Naive thymus-derived CD4-positive, alpha-beta T cell (primary cell): ENCODE measurements at regions of chr13 and their contacts with region 1.

Region 1: GRCh38 chr13:23871616-23872220 is 17.5 kb downstream of the MIPEP start:
- DNase-seq: peak in 4 of 9 donors; percentile 11 to 30 (median 23)
- ATAC-seq: no peak
- H3K4me3 ChIP-seq: no peak overlapping the region
- H3K4me3 Mint-ChIP-seq: no peak overlapping the region
- H3K27ac ChIP-seq: no peak overlapping the region
- H3K27ac Mint-ChIP-seq: no peak overlapping the region
- H3K4me1 ChIP-seq: no peaks in the 10 kb centered on the region
- H3K4me1 Mint-ChIP-seq: no peaks in the 10 kb centered on the region
- H3K27me3 ChIP-seq: no peaks in the 10 kb centered on the region
- H3K27me3 Mint-ChIP-seq: no peaks in the 10 kb centered on the region

Region 2: GRCh38 chr13:23411706-23412105 is 460.0 kb before region 1 on chr13:
- CTCF ChIA-PET with region 1: interaction called, 4 read pairs
- POLR2A ChIA-PET with region 1: no interaction called
- intact Hi-C with region 1: loop called in 1 of 2 experiments (anchors 1 kb)
- DNase-seq: no peak
- ATAC-seq: no peak
- H3K4me3 ChIP-seq: no peak overlapping the region
- H3K4me3 Mint-ChIP-seq: no peak overlapping the region
- H3K27ac ChIP-seq: no peak overlapping the region
- H3K27ac Mint-ChIP-seq: no peak overlapping the region
- H3K4me1 ChIP-seq: no peaks in the 10 kb centered on the region
- H3K4me1 Mint-ChIP-seq: peaks cover 0 to 3% (median 0%) of the 10 kb centered on the region in 7 donors
- H3K27me3 ChIP-seq: no peaks in the 10 kb centered on the region
- H3K27me3 Mint-ChIP-seq: peaks cover 4 to 17% (median 6%) of the 10 kb centered on the region in 5 donors

Region 3: DNA sequence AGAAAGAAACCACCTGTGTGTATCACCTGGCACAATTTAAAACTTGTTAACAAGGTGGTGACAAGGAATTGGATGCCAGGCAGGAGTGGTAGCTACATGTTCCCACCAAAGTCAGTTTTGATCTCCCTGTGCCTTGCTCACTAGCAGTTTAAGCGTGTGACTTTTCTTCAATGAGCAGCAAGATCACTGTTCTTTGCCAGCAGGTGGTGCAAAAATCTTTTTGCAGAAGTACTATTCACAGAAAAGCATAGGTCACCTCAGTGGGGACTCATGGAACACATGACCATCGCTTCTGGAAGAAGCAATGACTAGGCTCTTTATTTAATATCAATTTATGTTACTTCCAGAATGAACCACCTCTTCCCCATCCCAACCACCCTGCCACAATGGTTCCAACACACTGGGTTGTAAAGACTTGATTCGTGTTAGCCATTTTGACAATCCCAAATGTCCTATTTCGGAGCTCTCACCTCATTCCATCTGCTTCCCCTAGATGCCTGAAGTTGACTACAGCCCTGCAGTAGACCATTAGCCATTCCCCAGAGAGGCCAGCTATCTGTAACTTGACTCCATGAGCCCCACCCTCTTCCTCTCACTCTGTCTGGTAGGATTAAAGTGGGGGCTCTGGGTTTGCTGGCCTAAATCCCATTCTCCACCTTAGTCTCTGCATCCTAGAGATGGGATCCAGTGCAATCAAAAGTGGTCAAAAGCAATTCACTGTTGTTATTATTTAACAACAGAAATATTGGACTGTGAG is 360.6 kb before region 1 on chr13:
- CTCF ChIA-PET with region 1: no interaction called
- POLR2A ChIA-PET with region 1: no interaction called
- intact Hi-C with region 1: loop called (anchors 1 kb)
- DNase-seq: no peak
- ATAC-seq: no peak
- H3K4me3 ChIP-seq: no peak overlapping the region
- H3K4me3 Mint-ChIP-seq: no peak overlapping the region
- H3K27ac ChIP-seq: no peak overlapping the region
- H3K27ac Mint-ChIP-seq: no peak overlapping the region
- H3K4me1 ChIP-seq: no peaks in the 10 kb centered on the region
- H3K4me1 Mint-ChIP-seq: no peaks in the 10 kb centered on the region
- H3K27me3 ChIP-seq: no peaks in the 10 kb centered on the region
- H3K27me3 Mint-ChIP-seq: peaks cover 16 to 51% (median 29%) of the 10 kb centered on the region in 5 donors

Region 4: GRCh38 chr13:23667750-23668149 is 204.0 kb before region 1 on chr13:
- CTCF ChIA-PET with region 1: no interaction called
- POLR2A ChIA-PET with region 1: no interaction called
- intact Hi-C with region 1: loop called in 1 of 2 experiments (anchors 1 kb)
- DNase-seq: no peak
- ATAC-seq: no peak
- H3K4me3 ChIP-seq: no peak overlapping the region
- H3K4me3 Mint-ChIP-seq: no peak overlapping the region
- H3K27ac ChIP-seq: no peak overlapping the region
- H3K27ac Mint-ChIP-seq: no peak overlapping the region
- H3K4me1 ChIP-seq: no peaks in the 10 kb centered on the region
- H3K4me1 Mint-ChIP-seq: no peaks in the 10 kb centered on the region
- H3K27me3 ChIP-seq: no peaks in the 10 kb centered on the region
- H3K27me3 Mint-ChIP-seq: peaks cover 2 to 27% (median 8%) of the 10 kb centered on the region in 5 donors

Region 5: GRCh38 chr13:23715762-23716235 is 155.9 kb before region 1 on chr13:
- CTCF ChIA-PET with region 1: no interaction called
- POLR2A ChIA-PET with region 1: no interaction called
- intact Hi-C with region 1: loop called (anchors 2 to 5 kb)
- DNase-seq: no peak
- ATAC-seq: no peak
- H3K4me3 ChIP-seq: no peak overlapping the region
- H3K4me3 Mint-ChIP-seq: no peak overlapping the region
- H3K27ac ChIP-seq: no peak overlapping the region
- H3K27ac Mint-ChIP-seq: no peak overlapping the region
- H3K4me1 ChIP-seq: no peaks in the 10 kb centered on the region
- H3K4me1 Mint-ChIP-seq: peaks cover 14 to 38% (median 32%) of the 10 kb centered on the region in 7 donors
- H3K27me3 ChIP-seq: no peaks in the 10 kb centered on the region
- H3K27me3 Mint-ChIP-seq: peaks cover 0 to 18% (median 11%) of the 10 kb centered on the region in 5 donors

Region 6: DNA sequence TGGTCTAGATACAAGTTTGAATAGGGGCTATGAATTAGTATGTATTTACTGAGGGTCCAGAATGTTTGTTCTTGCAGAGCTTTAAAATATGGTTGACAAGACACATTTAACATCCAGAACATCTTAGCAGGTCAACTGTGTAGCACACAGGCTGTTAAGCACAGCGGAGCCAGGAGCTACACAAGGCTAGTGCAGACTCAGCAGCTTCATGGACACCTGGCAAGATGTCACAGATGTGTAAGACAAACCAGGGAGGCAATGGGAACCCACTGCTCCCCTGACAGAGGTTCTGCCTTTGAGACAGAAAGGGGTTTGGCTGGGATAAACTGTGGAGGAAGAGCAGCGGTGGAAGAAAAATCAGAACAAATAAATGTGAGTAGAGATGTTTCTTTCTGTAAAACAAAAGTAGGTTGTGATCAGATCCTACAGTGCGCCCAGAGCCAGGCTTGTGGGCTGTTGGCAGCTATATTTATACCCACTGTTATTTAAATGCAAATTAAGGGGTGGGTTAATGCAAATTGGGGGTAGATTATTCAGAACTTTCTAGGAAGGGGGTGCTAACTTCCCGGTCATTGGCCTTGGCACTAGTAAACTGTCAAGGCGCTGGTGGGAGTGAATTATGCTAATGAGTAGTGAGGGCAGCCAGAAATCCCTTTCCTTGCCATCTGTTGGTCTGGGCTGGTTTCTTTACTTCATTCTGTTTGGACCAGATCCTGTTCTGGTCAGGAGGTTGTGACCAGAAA is 15.5 kb before region 1 on chr13:
- CTCF ChIA-PET with region 1: no interaction called
- POLR2A ChIA-PET with region 1: no interaction called
- intact Hi-C with region 1: no loop called
- DNase-seq: no peak
- ATAC-seq: no peak
- H3K4me3 ChIP-seq: no peak overlapping the region
- H3K4me3 Mint-ChIP-seq: no peak overlapping the region
- H3K27ac ChIP-seq: no peak overlapping the region
- H3K27ac Mint-ChIP-seq: peak overlapping the region in 1 of 9 donors; percentile 15
- H3K4me1 ChIP-seq: no peaks in the 10 kb centered on the region
- H3K4me1 Mint-ChIP-seq: peaks cover 0 to 2% (median 0%) of the 10 kb centered on the region in 7 donors
- H3K27me3 ChIP-seq: no peaks in the 10 kb centered on the region
- H3K27me3 Mint-ChIP-seq: no peaks in the 10 kb centered on the region

Region 7: DNA sequence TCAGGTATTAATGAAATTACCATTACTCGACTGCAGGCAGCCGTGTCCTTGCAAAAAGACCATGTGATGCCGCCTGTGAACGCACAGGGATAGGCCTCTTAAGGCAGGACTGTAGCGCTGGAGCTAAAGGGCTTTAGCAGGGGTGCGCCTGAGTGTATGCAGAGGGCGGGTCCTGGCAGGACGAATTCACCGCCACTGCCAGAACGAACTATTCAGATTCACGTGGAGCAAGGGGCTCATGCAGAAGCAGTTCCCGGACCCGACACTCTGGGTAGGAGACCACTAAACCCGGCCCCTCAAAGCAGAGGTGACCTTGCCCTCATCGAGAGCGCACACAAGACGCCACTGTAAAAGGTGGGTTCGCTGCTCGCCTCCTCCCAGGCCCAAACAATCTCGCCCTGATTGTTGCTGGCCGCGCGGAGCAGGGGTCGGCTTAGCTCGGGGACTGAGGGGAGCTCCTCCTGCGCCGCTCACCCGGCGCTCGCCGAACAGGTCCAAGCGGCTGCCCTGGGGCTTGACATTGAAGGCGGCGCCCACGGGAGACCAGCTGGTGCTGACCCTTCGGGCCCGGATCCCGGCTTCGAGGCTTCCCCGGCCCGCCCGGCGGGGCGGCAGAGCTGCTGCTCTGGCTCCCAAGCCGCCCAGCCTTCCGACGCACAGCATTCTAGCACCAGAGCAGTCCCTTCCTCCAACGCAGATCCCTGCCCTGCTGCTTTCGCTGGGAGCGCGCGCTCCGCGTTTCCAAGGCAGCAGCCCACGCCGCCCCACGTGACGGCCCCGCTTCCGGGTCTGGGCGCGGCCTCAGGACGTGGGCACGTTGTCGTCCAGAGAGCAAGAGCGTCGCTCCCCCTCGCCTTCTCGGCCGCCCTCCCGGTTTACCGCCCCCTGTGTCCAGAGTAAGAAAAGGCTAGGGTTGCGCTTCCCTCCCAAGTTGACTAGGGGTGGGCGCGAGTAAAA is 17.2 kb after region 1 on chr13 and contains the start of gene MIPEP:
- CTCF ChIA-PET with region 1: no interaction called
- POLR2A ChIA-PET with region 1: no interaction called
- intact Hi-C with region 1: loop called in 1 of 2 experiments (anchors 1 kb)
- DNase-seq: peak; percentile 68 to 94 (median 83)
- ATAC-seq: peak; percentile 98
- H3K4me3 ChIP-seq: peak within 1 kb of the TSS; percentile 88
- H3K4me3 Mint-ChIP-seq: peak within 1 kb of the TSS; percentile 85 to 96 (median 92)
- H3K27ac ChIP-seq: peak within 1 kb of the TSS; percentile 70
- H3K27ac Mint-ChIP-seq: peak within 1 kb of the TSS; percentile 72 to 92 (median 84)
- H3K4me1 ChIP-seq: peaks cover 0 to 5% of the 10 kb centered on the region in 2 donors
- H3K4me1 Mint-ChIP-seq: peaks cover 12 to 31% (median 25%) of the 10 kb centered on the region in 7 donors
- H3K27me3 ChIP-seq: no peaks in the 10 kb centered on the region
- H3K27me3 Mint-ChIP-seq: no peaks in the 10 kb centered on the region
- total RNA-seq, gene MIPEP: 8.0 to 10.5 (median 9.2) TPM

Region 8: DNA sequence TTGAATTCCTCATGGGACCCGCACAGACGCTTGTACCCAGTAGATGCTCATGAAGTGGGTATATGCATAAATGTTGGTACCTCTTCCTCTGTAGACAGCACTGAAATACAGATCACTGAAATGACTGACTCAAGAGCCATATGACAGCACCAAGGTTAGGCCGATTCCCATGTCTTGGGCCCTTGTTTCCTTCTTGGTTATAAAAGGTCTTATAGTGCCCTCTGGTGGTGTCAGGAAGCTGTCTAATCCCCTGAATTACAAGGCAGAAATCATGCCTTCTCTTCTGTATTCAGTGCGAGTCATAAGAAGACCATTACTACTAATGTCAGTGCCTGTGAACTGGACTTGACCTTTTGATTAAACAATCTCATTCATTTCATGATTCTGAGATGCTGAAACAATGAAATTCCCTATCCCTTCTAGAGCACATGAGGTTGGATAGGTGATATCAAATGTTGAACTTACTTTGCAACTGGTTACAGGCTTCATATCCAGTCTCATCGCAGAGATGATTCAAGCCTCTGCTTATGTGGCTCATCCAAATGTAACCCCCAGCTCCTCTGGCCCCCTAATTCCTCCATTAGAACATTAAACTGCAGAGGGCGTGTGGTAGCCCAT is 348.5 kb after region 1 on chr13:
- CTCF ChIA-PET with region 1: no interaction called
- POLR2A ChIA-PET with region 1: no interaction called
- intact Hi-C with region 1: loop called in 1 of 2 experiments (anchors 1 kb)
- DNase-seq: peak in 7 of 9 donors; percentile 59 to 77 (median 70)
- ATAC-seq: peak; percentile 88
- H3K4me3 ChIP-seq: no peak overlapping the region
- H3K4me3 Mint-ChIP-seq: no peak overlapping the region
- H3K27ac ChIP-seq: no peak overlapping the region
- H3K27ac Mint-ChIP-seq: peak overlapping the region in 2 of 9 donors; percentile 10 to 50
- H3K4me1 ChIP-seq: peaks cover 0 to 7% of the 10 kb centered on the region in 2 donors
- H3K4me1 Mint-ChIP-seq: peaks cover 7 to 44% (median 22%) of the 10 kb centered on the region in 7 donors
- H3K27me3 ChIP-seq: no peaks in the 10 kb centered on the region
- H3K27me3 Mint-ChIP-seq: no peaks in the 10 kb centered on the region